Panc1 (cell line): ENCODE measurements at regions of chrX and their contacts with region 1.

Region 1: DNA sequence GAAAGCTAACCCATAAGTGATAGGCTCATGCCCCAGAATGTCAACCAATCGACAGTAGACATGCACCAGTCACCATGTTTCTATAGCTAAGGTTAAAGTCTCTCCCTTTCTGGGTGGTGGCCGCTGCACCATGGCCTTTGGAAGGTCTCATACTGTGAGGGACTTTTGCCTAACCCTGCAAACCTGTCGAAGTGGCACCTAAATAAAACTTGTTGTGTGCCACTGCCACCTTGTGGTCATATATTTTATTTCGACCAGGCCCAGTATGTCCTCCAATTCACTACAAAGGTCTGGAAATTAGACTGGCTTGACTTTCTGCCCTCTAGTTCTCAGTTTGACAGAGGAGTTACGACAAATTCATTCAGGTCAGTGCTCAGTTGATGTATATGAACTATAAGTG is 163.1 kb downstream of the SMARCA1 start:
- DNase-seq: peak; percentile 42
- ATAC-seq: peak; percentile 94
- H3K4me3 ChIP-seq: no peak overlapping the region
- H3K27ac ChIP-seq: no peak overlapping the region
- H3K4me1 ChIP-seq: no peaks in the 10 kb centered on the region
- H3K27me3 ChIP-seq: no peaks in the 10 kb centered on the region
- CTCF ChIP-seq: peak; percentile 79

Region 2: GRCh38 chrX:128807367-128807766 is 552.8 kb before region 1 on chrX:
- CTCF ChIA-PET with region 1: no interaction called
- POLR2A ChIA-PET with region 1: no interaction called
- in situ Hi-C with region 1: no loop called
- intact Hi-C with region 1: loop called (anchors 5 kb)
- DNase-seq: no peak
- ATAC-seq: no peak
- H3K4me3 ChIP-seq: no peak overlapping the region
- H3K27ac ChIP-seq: no peak overlapping the region
- H3K4me1 ChIP-seq: no peaks in the 10 kb centered on the region
- H3K27me3 ChIP-seq: no peaks in the 10 kb centered on the region
- CTCF ChIP-seq: no peak

Region 3: GRCh38 chrX:128870361-128870760 is 489.8 kb before region 1 on chrX:
- CTCF ChIA-PET with region 1: no interaction called
- POLR2A ChIA-PET with region 1: no interaction called
- in situ Hi-C with region 1: no loop called
- intact Hi-C with region 1: no loop called
- DNase-seq: no peak
- ATAC-seq: no peak
- H3K4me3 ChIP-seq: no peak overlapping the region
- H3K27ac ChIP-seq: no peak overlapping the region
- H3K4me1 ChIP-seq: no peaks in the 10 kb centered on the region
- H3K27me3 ChIP-seq: no peaks in the 10 kb centered on the region
- CTCF ChIP-seq: no peak

Region 4: DNA sequence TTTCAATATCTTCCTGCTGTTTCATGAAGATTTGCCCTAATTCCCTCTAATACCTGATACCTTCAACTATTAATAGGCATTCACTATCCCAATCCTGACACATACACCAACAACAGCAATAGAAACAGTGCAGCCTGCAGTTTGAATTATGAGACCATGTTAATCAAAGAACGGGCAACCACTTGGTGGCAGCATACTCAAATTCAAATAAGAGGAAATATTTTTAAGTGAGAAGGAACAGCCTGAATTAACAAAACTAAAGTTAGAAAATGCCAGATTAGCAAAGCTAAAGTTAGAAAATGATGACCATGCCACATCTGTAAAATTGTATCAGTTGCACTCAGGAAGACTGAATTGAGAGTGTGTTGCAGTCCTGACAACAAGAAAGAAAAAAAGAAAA is 41.8 kb before region 1 on chrX:
- CTCF ChIA-PET with region 1: no interaction called
- POLR2A ChIA-PET with region 1: no interaction called
- in situ Hi-C with region 1: no loop called
- intact Hi-C with region 1: loop called (anchors 1 kb)
- DNase-seq: no peak
- ATAC-seq: no peak
- H3K4me3 ChIP-seq: no peak overlapping the region
- H3K27ac ChIP-seq: no peak overlapping the region
- H3K4me1 ChIP-seq: no peaks in the 10 kb centered on the region; the same call in 1 of the 2 replicates
- H3K27me3 ChIP-seq: no peaks in the 10 kb centered on the region
- CTCF ChIP-seq: peak; percentile 57; the same call in 1 of the 2 replicates